ENCODE measurements at regions of chr6 and their contacts with region 1.

Region 1: DNA sequence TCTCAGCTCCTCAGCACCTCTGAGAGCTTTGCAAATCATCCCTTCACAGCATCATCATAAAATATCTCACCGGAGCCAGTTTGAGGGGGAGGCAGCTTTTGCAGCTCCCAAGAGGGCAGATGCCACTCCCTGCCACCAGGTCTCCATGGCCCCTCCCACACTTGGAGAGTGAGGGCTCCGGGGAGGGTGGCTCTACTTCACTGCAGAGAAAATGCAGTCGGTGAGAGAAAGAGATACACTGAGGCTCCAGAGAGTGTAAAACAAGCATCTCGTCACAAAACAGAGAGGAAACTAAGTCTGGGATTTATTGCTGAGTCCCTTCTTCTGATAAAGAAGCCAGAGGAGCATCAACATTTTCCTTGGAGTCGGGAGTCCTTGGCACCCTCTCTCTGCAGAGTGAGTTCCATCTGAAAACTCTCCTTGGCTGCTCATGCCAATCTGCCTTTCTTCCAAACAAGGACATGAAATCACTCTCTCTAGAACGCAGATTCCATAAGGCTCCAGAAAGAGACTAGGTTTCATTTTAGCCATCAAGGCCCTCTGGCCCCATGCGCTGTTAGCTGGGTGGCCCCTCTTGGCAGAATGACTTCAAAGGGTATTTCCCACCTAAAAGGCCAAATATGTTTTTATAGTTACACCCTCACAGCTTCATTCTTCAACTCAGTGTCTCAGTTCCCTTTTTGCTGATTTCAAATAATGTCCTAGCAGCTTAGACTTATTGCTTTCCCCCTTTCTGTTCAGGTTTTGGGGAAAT is 70.6 kb upstream of the F13A1 start:
- DNase-seq: peak; percentile 78
- ATAC-seq: peak; percentile 74
- H3K4me3 ChIP-seq: peak overlapping the region; percentile 40
- H3K27ac ChIP-seq: peak overlapping the region; percentile 96
- H3K4me1 ChIP-seq: peaks cover 37% of the 10 kb centered on the region
- H3K27me3 ChIP-seq: no peaks in the 10 kb centered on the region
- CTCF ChIP-seq: no peak
- EP300 ChIP-seq: peak; percentile 40 to 71; a peak in 3 of 4 replicates
- POLR2A ChIP-seq: peak; percentile 40; the same call in 1 of the 2 replicates
- RAD21 ChIP-seq: peak; percentile 21; the same call in 1 of the 2 replicates

Region 2: GRCh38 chr6:6046716-6047115 is 344.3 kb before region 1 on chr6:
- CTCF ChIA-PET with region 1: no interaction called
- POLR2A ChIA-PET with region 1: no interaction called
- RAD21 ChIA-PET with region 1: no interaction called
- SMC1A ChIA-PET with region 1: no interaction called
- in situ Hi-C with region 1: no loop called
- intact Hi-C with region 1: no loop called
- DNase-seq: no peak
- ATAC-seq: no peak
- H3K4me3 ChIP-seq: no peak overlapping the region
- H3K27ac ChIP-seq: no peak overlapping the region
- H3K4me1 ChIP-seq: no peaks in the 10 kb centered on the region
- H3K27me3 ChIP-seq: peaks cover 2 to 4% of the 10 kb centered on the region in 2 experiments; a peak in 2 of 4 replicates
- CTCF ChIP-seq: no peak
- EP300 ChIP-seq: no peak
- POLR2A ChIP-seq: no peak
- RAD21 ChIP-seq: no peak

Region 3: DNA sequence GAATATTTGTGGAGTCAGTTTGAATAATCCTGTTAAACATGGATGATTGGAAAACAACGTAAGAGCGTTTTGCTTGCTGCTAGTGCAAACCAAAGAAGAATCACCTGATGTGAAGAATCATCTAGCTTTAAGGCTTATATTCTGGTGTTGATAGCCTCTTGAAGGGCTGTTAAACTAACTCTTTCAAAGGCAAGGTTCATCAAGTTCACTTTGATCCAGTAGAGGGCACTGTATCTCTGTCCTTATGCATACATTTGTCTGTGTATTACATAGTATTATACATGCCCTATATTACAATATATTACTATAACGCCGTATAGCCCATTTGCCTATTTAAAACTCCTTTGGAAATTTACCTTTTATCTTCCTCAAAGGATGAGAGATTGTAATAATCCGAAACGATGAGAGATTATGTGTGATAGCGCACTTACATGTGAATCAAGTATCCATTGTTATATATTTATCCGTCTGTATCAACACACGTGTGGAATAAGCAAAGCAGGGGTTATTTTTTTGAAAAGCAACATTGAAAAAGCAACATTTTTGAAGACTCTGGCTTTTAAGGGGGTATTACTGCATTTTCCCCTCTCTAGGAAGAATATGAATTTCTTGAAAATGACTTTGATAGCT is 333.5 kb before region 1 on chr6:
- CTCF ChIA-PET with region 1: interaction called, 4 read pairs
- POLR2A ChIA-PET with region 1: no interaction called
- RAD21 ChIA-PET with region 1: interaction called, 3 read pairs
- SMC1A ChIA-PET with region 1: interaction called, 4 read pairs
- in situ Hi-C with region 1: no loop called
- intact Hi-C with region 1: loop called (anchors 1 kb)
- DNase-seq: peak; percentile 53
- ATAC-seq: peak; percentile 97
- H3K4me3 ChIP-seq: no peak overlapping the region
- H3K27ac ChIP-seq: no peak overlapping the region
- H3K4me1 ChIP-seq: no peaks in the 10 kb centered on the region
- H3K27me3 ChIP-seq: no peaks in the 10 kb centered on the region; a peak in 2 of 4 replicates
- CTCF ChIP-seq: peak; percentile 54 to 68 (median 66); a peak in 5 of 6 replicates
- EP300 ChIP-seq: no peak
- POLR2A ChIP-seq: no peak
- RAD21 ChIP-seq: peak; percentile 74

Region 4: GRCh38 chr6:6164367-6164766 is 226.7 kb before region 1 on chr6:
- CTCF ChIA-PET with region 1: no interaction called
- POLR2A ChIA-PET with region 1: no interaction called
- RAD21 ChIA-PET with region 1: no interaction called
- SMC1A ChIA-PET with region 1: no interaction called
- in situ Hi-C with region 1: no loop called
- intact Hi-C with region 1: no loop called
- DNase-seq: no peak
- ATAC-seq: no peak
- H3K4me3 ChIP-seq: no peak overlapping the region
- H3K27ac ChIP-seq: no peak overlapping the region
- H3K4me1 ChIP-seq: no peaks in the 10 kb centered on the region
- H3K27me3 ChIP-seq: no peaks in the 10 kb centered on the region
- CTCF ChIP-seq: no peak
- EP300 ChIP-seq: no peak
- POLR2A ChIP-seq: no peak
- RAD21 ChIP-seq: no peak

Region 5: GRCh38 chr6:6221787-6222535 is 169.1 kb before region 1 on chr6:
- CTCF ChIA-PET with region 1: interaction called, 5 read pairs
- POLR2A ChIA-PET with region 1: no interaction called
- RAD21 ChIA-PET with region 1: interaction called, 10 read pairs
- SMC1A ChIA-PET with region 1: interaction called, 4 read pairs
- in situ Hi-C with region 1: no loop called
- intact Hi-C with region 1: loop called (anchors 10 kb)
- DNase-seq: no peak
- ATAC-seq: peak; percentile 68
- H3K4me3 ChIP-seq: no peak overlapping the region
- H3K27ac ChIP-seq: no peak overlapping the region
- H3K4me1 ChIP-seq: no peaks in the 10 kb centered on the region
- H3K27me3 ChIP-seq: no peaks in the 10 kb centered on the region
- CTCF ChIP-seq: peak; percentile 33 to 44 (median 33); a peak in 4 of 6 replicates
- EP300 ChIP-seq: no peak
- POLR2A ChIP-seq: no peak
- RAD21 ChIP-seq: peak; percentile 52

Region 6: GRCh38 chr6:6287415-6287814 is 103.6 kb before region 1 on chr6:
- CTCF ChIA-PET with region 1: interaction called, 6 read pairs
- POLR2A ChIA-PET with region 1: no interaction called
- RAD21 ChIA-PET with region 1: interaction called, 11 read pairs
- SMC1A ChIA-PET with region 1: interaction called, 7 read pairs
- in situ Hi-C with region 1: no loop called
- intact Hi-C with region 1: no loop called
- DNase-seq: peak; percentile 42
- ATAC-seq: peak; percentile 94
- H3K4me3 ChIP-seq: no peak overlapping the region
- H3K27ac ChIP-seq: no peak overlapping the region
- H3K4me1 ChIP-seq: no peaks in the 10 kb centered on the region
- H3K27me3 ChIP-seq: no peaks in the 10 kb centered on the region
- CTCF ChIP-seq: no peak
- EP300 ChIP-seq: no peak
- POLR2A ChIP-seq: no peak
- RAD21 ChIP-seq: no peak

Region 7: DNA sequence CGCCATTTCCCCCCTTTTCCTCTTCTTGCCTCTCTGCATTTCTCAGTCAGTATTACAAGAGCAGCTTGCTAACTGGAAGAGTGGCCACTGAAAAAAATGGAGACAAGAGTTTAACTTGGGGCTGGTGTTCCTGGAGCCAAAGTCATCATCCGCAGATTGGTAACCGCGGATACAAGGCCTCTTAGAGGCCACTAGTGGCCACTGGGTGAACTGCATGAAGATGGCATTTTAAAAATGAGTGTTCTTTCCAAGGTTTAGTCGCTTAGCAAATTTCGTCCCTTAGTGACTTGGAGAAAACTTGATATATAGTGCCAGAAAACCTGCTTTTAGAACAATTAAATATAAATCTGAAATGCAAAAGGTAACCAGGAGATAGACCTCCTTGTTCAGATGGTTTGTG is 75.4 kb before region 1 on chr6:
- CTCF ChIA-PET with region 1: interaction called, 5 read pairs
- POLR2A ChIA-PET with region 1: interaction called, 6 read pairs
- RAD21 ChIA-PET with region 1: interaction called, 14 read pairs
- SMC1A ChIA-PET with region 1: interaction called, 6 read pairs
- in situ Hi-C with region 1: no loop called
- intact Hi-C with region 1: loop called (anchors 5 kb)
- DNase-seq: no peak
- ATAC-seq: peak; percentile 26; the same call in 2 of the 3 replicates
- H3K4me3 ChIP-seq: no peak overlapping the region
- H3K27ac ChIP-seq: no peak overlapping the region
- H3K4me1 ChIP-seq: peaks cover 11% of the 10 kb centered on the region
- H3K27me3 ChIP-seq: peaks cover 0 to 4% of the 10 kb centered on the region in 2 experiments; a peak in 2 of 4 replicates
- CTCF ChIP-seq: peak; percentile 78 to 89 (median 89)
- EP300 ChIP-seq: no peak
- POLR2A ChIP-seq: no peak
- RAD21 ChIP-seq: peak; percentile 75

Region 8: DNA sequence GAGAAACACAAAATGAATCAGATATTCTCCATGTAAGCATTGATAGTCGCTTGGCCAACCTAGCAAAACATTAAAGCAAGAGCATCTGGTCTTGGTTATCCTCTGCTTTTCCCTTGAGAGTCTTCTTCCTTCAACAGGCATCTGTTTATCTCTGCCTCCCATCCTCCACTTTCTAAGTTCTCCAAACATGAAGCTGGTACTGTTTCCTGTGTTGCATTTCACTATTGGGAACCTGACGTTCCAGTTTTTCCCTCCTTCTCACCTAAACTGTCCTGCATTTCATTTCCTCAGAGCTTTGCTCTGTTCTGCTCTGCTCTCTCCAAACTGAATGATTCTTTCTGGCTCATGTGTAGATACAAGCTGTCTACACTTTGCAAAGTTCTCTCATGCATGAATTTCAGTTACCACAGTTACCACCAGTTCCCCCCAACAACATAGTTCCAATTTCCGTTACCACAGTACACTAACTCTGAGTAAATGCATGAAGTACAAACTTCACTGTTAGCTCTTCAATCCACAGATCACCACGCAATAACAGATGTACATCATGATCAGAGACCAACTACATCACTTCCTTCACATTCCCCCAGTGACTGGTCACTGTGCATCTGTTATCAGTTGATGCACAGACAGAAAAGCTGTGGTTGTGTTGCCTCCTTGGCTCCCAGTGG is 16.2 kb after region 1 on chr6:
- CTCF ChIA-PET with region 1: interaction called, 21 read pairs
- POLR2A ChIA-PET with region 1: interaction called, 27 read pairs
- RAD21 ChIA-PET with region 1: interaction called, 110 read pairs
- SMC1A ChIA-PET with region 1: interaction called, 167 read pairs
- in situ Hi-C with region 1: no loop called
- intact Hi-C with region 1: loop called (anchors 1 kb)
- DNase-seq: peak; percentile 97
- ATAC-seq: peak; percentile 95
- H3K4me3 ChIP-seq: peak overlapping the region; percentile 23; the same call in 1 of the 2 replicates
- H3K27ac ChIP-seq: peak overlapping the region; percentile 54
- H3K4me1 ChIP-seq: peaks cover 22% of the 10 kb centered on the region
- H3K27me3 ChIP-seq: no peaks in the 10 kb centered on the region
- CTCF ChIP-seq: no peak
- EP300 ChIP-seq: peak; percentile 76 to 83; a peak in 3 of 4 replicates
- POLR2A ChIP-seq: peak; percentile 47; the same call in 1 of the 2 replicates
- RAD21 ChIP-seq: 0 out of 2 replicates have a peak, but pooled peaks have one; percentile 8

Region 9: DNA sequence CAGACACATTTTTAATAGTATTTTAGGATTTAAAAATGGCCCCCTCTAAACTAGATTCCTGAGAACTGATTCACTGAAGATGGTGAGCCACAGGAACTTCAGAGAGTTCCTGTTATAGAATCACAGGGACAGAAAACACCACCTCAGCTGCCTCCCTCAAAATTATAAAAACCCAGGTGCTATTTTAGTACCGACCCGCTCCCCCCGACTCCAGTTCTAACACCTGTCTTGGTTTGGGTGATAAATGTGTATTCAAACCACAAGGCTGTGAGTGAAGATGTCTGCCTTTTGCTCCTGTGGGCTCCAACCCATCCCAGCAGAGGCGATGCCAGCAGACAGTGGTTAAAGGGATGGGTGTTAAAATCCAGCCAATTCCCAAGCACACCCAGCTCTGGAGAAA is 70.1 kb after region 1 on chr6:
- CTCF ChIA-PET with region 1: interaction called, 7 read pairs
- POLR2A ChIA-PET with region 1: no interaction called
- RAD21 ChIA-PET with region 1: interaction called, 24 read pairs
- SMC1A ChIA-PET with region 1: interaction called, 13 read pairs
- in situ Hi-C with region 1: no loop called
- intact Hi-C with region 1: no loop called
- DNase-seq: no peak
- ATAC-seq: peak; percentile 82
- H3K4me3 ChIP-seq: no peak overlapping the region
- H3K27ac ChIP-seq: no peak overlapping the region; the same call in 1 of the 2 replicates
- H3K4me1 ChIP-seq: peaks cover 6% of the 10 kb centered on the region; the same call in 1 of the 2 replicates
- H3K27me3 ChIP-seq: no peaks in the 10 kb centered on the region
- CTCF ChIP-seq: no peak
- EP300 ChIP-seq: peak in 1 of 2 experiments; percentile 67; a peak in 2 of 4 replicates
- POLR2A ChIP-seq: no peak
- RAD21 ChIP-seq: no peak